MCF 10A (cell line): ENCODE measurements at regions of chr18 and their contacts with region 1.

Region 1: DNA sequence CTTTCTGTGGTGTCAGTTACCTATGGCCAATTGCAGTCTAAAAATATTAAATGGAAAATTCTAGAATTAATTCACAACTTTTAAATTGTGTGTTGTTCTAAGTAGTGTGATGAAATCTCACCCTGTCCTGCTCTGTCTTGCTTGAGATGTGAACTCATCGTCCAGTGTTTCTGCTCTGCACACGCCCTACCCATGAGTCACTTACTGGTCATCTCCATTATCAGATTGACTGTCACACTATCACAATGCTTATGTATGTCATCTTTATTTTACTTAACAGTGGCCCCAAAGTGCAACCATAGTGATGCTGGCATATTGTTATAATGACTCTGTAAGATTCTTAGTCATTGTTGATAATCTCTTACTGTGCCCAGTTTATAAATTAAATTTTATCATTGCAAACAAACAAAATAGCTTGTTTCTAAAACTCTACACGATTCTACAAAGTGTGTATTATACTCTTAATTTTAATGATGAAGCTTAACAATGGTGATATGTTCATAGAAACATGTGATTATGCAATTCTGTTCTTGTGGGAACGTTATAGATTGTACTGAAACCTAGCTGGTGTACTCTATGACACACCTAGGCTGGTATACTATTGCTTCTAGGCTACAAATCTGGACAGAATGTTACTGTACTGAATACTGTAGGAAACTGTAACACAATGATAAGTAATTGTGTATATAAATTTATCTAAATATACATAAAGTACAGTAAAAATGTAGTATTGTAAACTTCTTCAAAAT is 1086.8 kb upstream of the PIK3C3 start:
- DNase-seq: peak; percentile 95
- H3K4me3 Mint-ChIP-seq: peak overlapping the region; percentile 52
- H3K27ac Mint-ChIP-seq: peak overlapping the region; percentile 96
- H3K4me1 Mint-ChIP-seq: peaks cover 28% of the 10 kb centered on the region
- H3K27me3 Mint-ChIP-seq: no peaks in the 10 kb centered on the region
- CTCF ChIP-seq: no peak

Region 2: GRCh38 chr18:40851014-40851429 is 17.3 kb before region 1 on chr18:
- CTCF ChIA-PET with region 1: no interaction called
- POLR2A ChIA-PET with region 1: interaction called, 21 read pairs
- intact Hi-C with region 1: no loop called
- DNase-seq: peak; percentile 97
- H3K4me3 Mint-ChIP-seq: peak overlapping the region; percentile 4
- H3K27ac Mint-ChIP-seq: peak overlapping the region; percentile 1
- H3K4me1 Mint-ChIP-seq: peaks cover 22% of the 10 kb centered on the region
- H3K27me3 Mint-ChIP-seq: no peaks in the 10 kb centered on the region
- CTCF ChIP-seq: no peak

Region 3: DNA sequence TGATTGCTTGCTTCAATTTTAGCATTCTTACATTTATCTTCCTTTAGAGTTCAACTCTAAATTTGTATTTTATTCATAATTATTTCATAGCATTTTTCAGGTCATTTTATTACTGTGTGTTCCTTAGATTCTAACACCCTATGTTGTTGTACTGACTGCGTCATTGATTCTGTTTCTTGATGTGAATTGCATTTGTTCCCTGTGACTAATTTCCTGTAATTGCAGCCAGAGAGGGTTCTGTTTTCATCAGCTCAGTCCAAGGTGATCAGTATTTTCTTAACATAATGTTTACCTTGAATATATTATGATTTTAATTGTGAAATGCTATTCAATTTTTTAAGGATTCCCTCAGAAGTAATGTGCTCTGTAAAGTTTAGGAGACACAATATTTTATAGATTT is 116.6 kb after region 1 on chr18:
- CTCF ChIA-PET with region 1: interaction called, 3 read pairs
- POLR2A ChIA-PET with region 1: interaction called, 3 read pairs
- intact Hi-C with region 1: loop called (anchors 2 kb)
- DNase-seq: peak; percentile 88
- H3K4me3 Mint-ChIP-seq: peak overlapping the region; percentile 16
- H3K27ac Mint-ChIP-seq: peak overlapping the region; percentile 93
- H3K4me1 Mint-ChIP-seq: peaks cover 35% of the 10 kb centered on the region
- H3K27me3 Mint-ChIP-seq: no peaks in the 10 kb centered on the region
- CTCF ChIP-seq: no peak

Region 4: DNA sequence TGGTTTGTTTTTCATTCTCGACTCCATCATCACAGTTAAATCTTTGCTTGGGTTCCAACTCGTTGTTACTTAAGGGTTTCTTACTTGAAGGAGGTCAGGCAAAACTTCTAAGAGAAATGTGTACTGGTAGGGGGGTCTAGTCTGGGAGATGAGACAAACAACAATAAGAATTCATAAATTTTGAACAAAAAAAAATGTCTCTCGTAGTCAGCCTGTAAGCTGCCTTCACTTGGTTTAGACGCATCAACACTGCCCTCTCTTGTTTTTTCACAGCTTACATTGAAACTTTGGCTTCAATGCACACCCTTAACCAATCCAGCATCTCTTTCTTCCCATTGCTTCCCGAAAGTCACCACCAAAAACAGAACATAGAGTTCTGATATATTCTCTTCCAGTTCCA is 510.3 kb after region 1 on chr18:
- CTCF ChIA-PET with region 1: no interaction called
- POLR2A ChIA-PET with region 1: no interaction called
- intact Hi-C with region 1: loop called (anchors 10 kb)
- DNase-seq: peak; percentile 54
- H3K4me3 Mint-ChIP-seq: no peak overlapping the region
- H3K27ac Mint-ChIP-seq: no peak overlapping the region
- H3K4me1 Mint-ChIP-seq: no peaks in the 10 kb centered on the region
- H3K27me3 Mint-ChIP-seq: no peaks in the 10 kb centered on the region
- CTCF ChIP-seq: peak; percentile 55

Region 5: DNA sequence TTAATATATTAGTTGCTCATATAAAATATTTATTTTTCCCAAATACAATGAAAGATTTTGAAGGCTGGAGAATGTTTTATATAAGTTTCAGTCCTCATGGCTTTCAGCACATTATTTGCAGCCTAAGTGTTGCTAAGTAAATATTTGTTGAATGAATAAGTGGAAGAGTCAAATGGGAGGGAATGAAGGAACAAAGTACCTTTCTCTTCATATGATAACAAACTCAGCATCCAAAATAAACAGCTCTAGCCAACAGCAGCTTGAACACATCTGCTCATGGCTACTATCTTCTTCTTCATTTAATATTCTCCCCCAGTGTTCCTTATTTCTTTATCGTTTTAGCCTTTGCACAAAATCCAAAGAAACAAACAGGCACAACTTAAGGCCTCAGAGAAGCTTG is 701.6 kb after region 1 on chr18:
- CTCF ChIA-PET with region 1: no interaction called
- POLR2A ChIA-PET with region 1: no interaction called
- intact Hi-C with region 1: no loop called
- DNase-seq: no peak
- H3K4me3 Mint-ChIP-seq: no peak overlapping the region
- H3K27ac Mint-ChIP-seq: no peak overlapping the region
- H3K4me1 Mint-ChIP-seq: no peaks in the 10 kb centered on the region
- H3K27me3 Mint-ChIP-seq: peaks cover 48% of the 10 kb centered on the region
- CTCF ChIP-seq: no peak